Activated T-helper 1 cell treated with anti-CD3 and anti-CD28 coated beads, Interleukin-12 subunit alpha, Interleukin-12 subunit beta, Interleukin-2, Interleukin-4 antibody, amounts not matched to agents 30 ng/mL and 10 ng/mL and 1 ng/mL, durations not matched to agents 14 hours and 24 hours and 36 hours (primary cell): ENCODE measurements at regions of chr20 and their contacts with region 1.

Region 1: DNA sequence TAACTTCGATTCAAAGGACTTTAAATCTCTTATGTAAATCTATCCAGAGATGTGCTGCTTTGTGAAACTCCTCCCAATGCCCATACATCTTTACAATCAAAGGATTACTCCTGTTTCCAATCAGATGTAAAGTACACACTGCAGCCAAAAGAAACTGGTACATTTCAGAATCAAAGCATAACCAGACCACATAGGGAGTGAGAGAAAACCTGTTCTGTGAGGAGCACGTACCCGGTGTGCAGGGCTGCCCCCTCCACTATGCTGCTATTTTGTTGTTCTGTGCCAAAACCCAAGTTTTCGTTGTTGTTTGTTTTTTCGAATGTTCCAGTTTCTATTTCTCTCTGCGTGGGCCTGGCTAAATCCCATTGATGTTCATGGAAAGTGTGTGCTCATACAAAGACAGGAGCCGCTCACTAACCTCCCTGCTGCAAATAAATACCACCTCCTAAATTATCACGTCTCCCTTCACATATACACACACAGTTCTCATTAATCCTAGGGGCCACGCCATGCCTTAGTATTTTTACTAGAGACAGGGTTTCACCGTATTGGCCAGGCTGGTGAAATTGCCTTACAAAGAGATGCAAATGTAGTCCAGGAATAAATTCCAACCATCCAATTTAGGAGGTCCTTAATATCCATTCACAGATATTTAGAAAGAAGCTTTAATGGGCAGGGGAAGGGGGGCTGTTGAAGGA is 52.9 kb downstream of the ATP9A start:
- DNase-seq: no peak
- H3K4me3 Mint-ChIP-seq: peak overlapping the region; percentile 50
- H3K27ac Mint-ChIP-seq: peak overlapping the region; percentile 88
- H3K4me1 Mint-ChIP-seq: peaks cover 39% of the 10 kb centered on the region
- H3K27me3 Mint-ChIP-seq: peaks cover 5% of the 10 kb centered on the region

Region 2: DNA sequence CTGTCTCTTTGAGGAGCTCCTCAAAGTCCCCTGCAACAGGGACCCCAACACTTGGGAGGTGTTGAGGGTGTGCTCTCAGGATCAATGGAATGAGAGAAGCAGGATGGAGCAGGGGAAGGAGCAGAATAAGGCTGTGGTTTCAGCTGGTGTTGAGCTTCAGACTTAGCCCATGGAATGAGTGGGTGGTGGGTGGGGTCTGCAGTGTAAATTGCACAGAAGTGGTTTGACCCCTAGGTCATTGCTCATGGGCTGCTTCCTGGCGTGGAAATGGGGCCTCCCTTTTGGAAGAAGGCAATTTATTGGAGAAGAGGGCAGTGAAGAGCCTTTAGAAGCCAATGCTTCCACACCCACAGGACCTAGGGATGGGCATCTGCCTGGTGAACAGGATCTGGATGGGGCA is 655.5 kb before region 1 on chr20:
- intact Hi-C with region 1: loop called (anchors 5 kb)
- DNase-seq: no peak
- H3K4me3 Mint-ChIP-seq: no peak overlapping the region
- H3K27ac Mint-ChIP-seq: no peak overlapping the region
- H3K4me1 Mint-ChIP-seq: peaks cover 32% of the 10 kb centered on the region
- H3K27me3 Mint-ChIP-seq: peaks cover 10% of the 10 kb centered on the region

Region 3: DNA sequence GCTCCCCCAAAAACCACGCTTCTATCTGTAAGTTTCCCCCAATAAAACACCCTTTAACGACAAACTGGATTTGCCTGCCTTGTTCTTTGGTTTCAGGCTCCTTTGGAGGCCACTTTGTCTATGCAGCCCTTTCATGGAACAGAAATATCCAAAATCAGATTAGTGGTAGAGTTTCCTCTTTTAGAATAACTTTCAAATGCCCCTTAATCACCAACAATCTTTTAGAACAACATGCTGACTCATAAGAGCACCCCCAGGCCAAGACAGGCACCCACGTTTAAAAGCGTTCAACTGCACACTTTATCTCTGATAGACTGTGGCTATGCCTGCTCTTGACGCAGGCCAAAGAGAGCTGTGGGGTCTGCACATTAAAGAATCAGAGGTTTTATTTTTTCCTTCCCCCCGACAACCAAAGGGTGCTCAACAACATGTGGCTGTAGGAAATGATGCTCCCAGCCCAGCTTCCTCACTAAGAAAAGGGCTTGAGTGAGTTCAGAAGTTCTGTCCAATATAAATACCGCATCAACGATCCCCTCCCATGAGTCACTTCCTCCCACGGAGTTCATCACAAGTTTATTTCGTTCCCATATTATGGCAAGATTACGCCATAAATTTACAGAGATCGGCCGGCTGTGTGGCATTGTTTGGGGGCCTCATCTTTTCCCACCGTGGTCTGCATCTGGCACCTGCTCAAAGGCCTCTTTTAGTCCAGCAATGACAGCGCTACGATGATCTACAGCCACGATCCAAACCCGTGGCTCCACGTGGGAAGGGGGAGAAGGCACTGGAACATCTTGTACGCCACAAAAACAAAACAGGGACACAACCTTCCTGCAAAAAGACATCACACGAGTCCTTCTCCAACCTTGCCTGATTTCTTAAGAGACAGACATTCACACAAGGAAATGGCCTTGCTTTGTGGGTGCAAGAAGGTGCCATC is 84.0 kb before region 1 on chr20:
- intact Hi-C with region 1: loop called (anchors 1 kb)
- DNase-seq: peak; percentile 7
- H3K4me3 Mint-ChIP-seq: peak overlapping the region; percentile 5
- H3K27ac Mint-ChIP-seq: peak overlapping the region; percentile 70
- H3K4me1 Mint-ChIP-seq: peaks cover 43% of the 10 kb centered on the region
- H3K27me3 Mint-ChIP-seq: peaks cover 7% of the 10 kb centered on the region

Region 4: GRCh38 chr20:51695574-51696303 is 19.6 kb before region 1 on chr20:
- intact Hi-C with region 1: loop called (anchors 1 kb)
- DNase-seq: no peak
- H3K4me3 Mint-ChIP-seq: peak overlapping the region; percentile 37
- H3K27ac Mint-ChIP-seq: peak overlapping the region; percentile 52
- H3K4me1 Mint-ChIP-seq: peaks cover 23% of the 10 kb centered on the region
- H3K27me3 Mint-ChIP-seq: peaks cover 13% of the 10 kb centered on the region

Region 5: GRCh38 chr20:51767010-51767558 is 51.8 kb after region 1 on chr20:
- intact Hi-C with region 1: loop called (anchors 1 kb)
- DNase-seq: peak; percentile 60
- H3K4me3 Mint-ChIP-seq: peak overlapping the region; percentile 69
- H3K27ac Mint-ChIP-seq: no peak overlapping the region
- H3K4me1 Mint-ChIP-seq: peaks cover 9% of the 10 kb centered on the region
- H3K27me3 Mint-ChIP-seq: peaks cover 27% of the 10 kb centered on the region